ENCODE measurements at regions of chr14 and their contacts with region 1.

Region 1: DNA sequence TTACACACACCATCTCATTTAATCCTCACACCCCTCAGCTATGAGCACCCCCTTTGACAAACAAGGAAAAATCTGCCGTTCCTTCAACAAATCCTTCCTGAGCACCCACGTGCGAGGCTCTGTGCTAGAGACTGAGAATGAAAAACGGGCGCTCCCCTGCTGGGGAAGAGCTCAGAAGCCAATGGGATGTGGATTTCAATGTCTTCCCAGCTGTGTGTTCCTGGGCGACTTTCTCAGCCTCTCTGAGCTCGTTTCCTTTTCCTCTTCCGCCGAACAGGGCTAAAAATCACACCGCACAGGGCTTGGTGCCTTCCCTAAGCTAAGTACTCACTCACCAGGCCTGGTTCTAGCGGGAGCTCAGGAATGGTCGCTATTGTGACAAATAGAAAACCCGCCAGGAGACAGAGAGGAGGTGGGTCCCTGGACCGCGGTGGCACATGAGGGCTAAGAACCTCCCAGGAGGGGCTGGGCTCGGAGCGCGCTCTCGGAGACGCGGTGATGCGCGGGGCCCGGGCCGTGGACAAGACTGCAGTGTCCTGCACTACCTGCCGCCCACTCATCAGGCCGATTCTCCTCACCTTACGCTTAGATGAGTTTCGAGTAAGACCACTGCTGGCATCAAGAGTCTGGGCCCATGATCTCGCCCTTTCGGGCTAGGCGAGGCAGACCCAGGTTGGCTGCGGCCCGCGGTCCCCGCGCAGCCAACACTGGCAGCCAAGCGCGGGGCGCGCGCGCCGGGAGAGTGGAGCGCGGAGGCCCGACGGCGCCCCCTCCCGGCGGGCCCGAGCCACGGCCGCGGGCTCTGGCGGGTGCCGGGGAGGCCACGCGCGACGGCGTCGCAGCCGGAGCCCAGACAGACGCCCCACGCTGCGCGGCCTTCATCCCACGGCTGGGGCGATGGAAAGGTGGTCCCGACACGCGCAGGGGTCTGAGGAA is 17.0 kb downstream of the ZDHHC22 start:
- DNase-seq: peak; percentile 25 to 85 (median 63)
- ATAC-seq: peak; percentile 79
- H3K4me3 ChIP-seq: peak overlapping the region; percentile 57 to 63
- H3K4me3 Mint-ChIP-seq: peak overlapping the region; percentile 81
- H3K27ac ChIP-seq: no peak overlapping the region
- H3K27ac Mint-ChIP-seq: peak overlapping the region; percentile 80
- H3K4me1 ChIP-seq: peaks cover 23% of the 10 kb centered on the region
- H3K4me1 Mint-ChIP-seq: peaks cover 47% of the 10 kb centered on the region
- H3K27me3 ChIP-seq: peaks cover 0 to 8% of the 10 kb centered on the region in 2 experiments
- H3K27me3 Mint-ChIP-seq: peaks cover 30% of the 10 kb centered on the region
- CTCF ChIP-seq: peak; percentile 63

Region 2: GRCh38 chr14:77108746-77109145 is 15.9 kb before region 1 on chr14:
- CTCF ChIA-PET with region 1: interaction called, 16 read pairs
- POLR2A ChIA-PET with region 1: interaction called, 3 read pairs
- intact Hi-C with region 1: loop called in 1 of 2 experiments (anchors 2 kb)
- DNase-seq: peak in 1 of 9 experiments; percentile 14
- ATAC-seq: no peak
- H3K4me3 ChIP-seq: no peak overlapping the region
- H3K4me3 Mint-ChIP-seq: no peak overlapping the region
- H3K27ac ChIP-seq: no peak overlapping the region
- H3K27ac Mint-ChIP-seq: no peak overlapping the region
- H3K4me1 ChIP-seq: no peaks in the 10 kb centered on the region
- H3K4me1 Mint-ChIP-seq: peaks cover 3% of the 10 kb centered on the region
- H3K27me3 ChIP-seq: no peaks in the 10 kb centered on the region
- H3K27me3 Mint-ChIP-seq: no peaks in the 10 kb centered on the region
- CTCF ChIP-seq: no peak